ENCODE measurements at regions of chr10 and their contacts with region 1.

Region 1: DNA sequence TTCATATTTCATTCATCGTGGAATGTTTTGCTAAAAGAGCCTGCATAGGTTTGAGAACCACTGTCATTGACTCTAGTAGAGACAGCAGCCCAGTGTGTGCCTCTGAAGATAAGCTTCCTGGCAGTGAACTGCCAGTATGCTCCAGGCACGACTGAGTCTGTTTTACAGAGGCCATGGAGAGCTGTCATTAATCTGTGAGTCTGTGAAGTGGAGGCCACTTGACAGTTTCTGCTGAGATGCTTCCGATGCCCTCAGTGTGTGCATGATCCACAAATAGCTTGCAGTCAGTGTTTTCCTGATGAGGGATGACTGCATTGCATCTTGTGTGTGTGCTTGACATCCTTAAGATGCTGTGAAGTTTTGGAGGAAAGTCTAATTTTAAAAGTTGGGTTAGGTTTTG is 162.2 kb downstream of the PFKFB3 start:
- DNase-seq: no peak
- ATAC-seq: no peak
- H3K4me3 ChIP-seq: no peak overlapping the region
- H3K27ac ChIP-seq: no peak overlapping the region
- H3K4me1 ChIP-seq: no peaks in the 10 kb centered on the region
- H3K27me3 ChIP-seq: no peaks in the 10 kb centered on the region; a peak in 2 of 4 replicates
- CTCF ChIP-seq: no peak
- EP300 ChIP-seq: no peak
- POLR2A ChIP-seq: no peak
- RAD21 ChIP-seq: no peak

Region 2: GRCh38 chr10:6353526-6353925 is 11.4 kb before region 1 on chr10:
- CTCF ChIA-PET with region 1: interaction called, 10 read pairs
- POLR2A ChIA-PET with region 1: interaction called, 3 read pairs
- RAD21 ChIA-PET with region 1: interaction called, 3 read pairs
- SMC1A ChIA-PET with region 1: interaction called, 10 read pairs
- in situ Hi-C with region 1: no loop called
- intact Hi-C with region 1: no loop called
- DNase-seq: no peak
- ATAC-seq: no peak
- H3K4me3 ChIP-seq: no peak overlapping the region
- H3K27ac ChIP-seq: no peak overlapping the region
- H3K4me1 ChIP-seq: peaks cover 14% of the 10 kb centered on the region
- H3K27me3 ChIP-seq: no peaks in the 10 kb centered on the region
- CTCF ChIP-seq: no peak
- EP300 ChIP-seq: no peak
- POLR2A ChIP-seq: no peak
- RAD21 ChIP-seq: no peak

Region 3: GRCh38 chr10:6379015-6379776 is 14.3 kb after region 1 on chr10:
- CTCF ChIA-PET with region 1: interaction called, 17 read pairs
- POLR2A ChIA-PET with region 1: interaction called, 3 read pairs
- RAD21 ChIA-PET with region 1: interaction called, 4 read pairs
- SMC1A ChIA-PET with region 1: interaction called, 7 read pairs
- in situ Hi-C with region 1: no loop called
- intact Hi-C with region 1: no loop called
- DNase-seq: no peak
- ATAC-seq: no peak
- H3K4me3 ChIP-seq: no peak overlapping the region
- H3K27ac ChIP-seq: no peak overlapping the region
- H3K4me1 ChIP-seq: no peaks in the 10 kb centered on the region
- H3K27me3 ChIP-seq: peaks cover 0 to 2% of the 10 kb centered on the region in 2 experiments; a peak in 1 of 4 replicates
- CTCF ChIP-seq: no peak
- EP300 ChIP-seq: no peak
- POLR2A ChIP-seq: no peak
- RAD21 ChIP-seq: no peak

Measured in GM12878 (cell line).